GM13976 (cell line): ENCODE measurements at regions of chr16 and their contacts with region 1.

Region 1: GRCh38 chr16:10964039-10964890 is 19.9 kb downstream of the CLEC16A start:
- DNase-seq: peak; percentile 71
- CTCF ChIP-seq: peak; percentile 93

Region 2: GRCh38 chr16:11255737-11256660 is 291.7 kb after region 1 on chr16 and contains the start of gene SOCS1:
- in situ Hi-C with region 1: loop called (anchors 10 kb)
- DNase-seq: peak; percentile 92
- CTCF ChIP-seq: peak; percentile 85

Region 3: GRCh38 chr16:11546608-11547061 is 582.4 kb after region 1 on chr16:
- in situ Hi-C with region 1: loop called (anchors 25 kb)
- DNase-seq: no peak
- CTCF ChIP-seq: no peak

Region 4: GRCh38 chr16:11639925-11640899 is 675.9 kb after region 1 on chr16:
- in situ Hi-C with region 1: loop called (anchors 25 kb)
- DNase-seq: no peak
- CTCF ChIP-seq: no peak

Region 5: DNA sequence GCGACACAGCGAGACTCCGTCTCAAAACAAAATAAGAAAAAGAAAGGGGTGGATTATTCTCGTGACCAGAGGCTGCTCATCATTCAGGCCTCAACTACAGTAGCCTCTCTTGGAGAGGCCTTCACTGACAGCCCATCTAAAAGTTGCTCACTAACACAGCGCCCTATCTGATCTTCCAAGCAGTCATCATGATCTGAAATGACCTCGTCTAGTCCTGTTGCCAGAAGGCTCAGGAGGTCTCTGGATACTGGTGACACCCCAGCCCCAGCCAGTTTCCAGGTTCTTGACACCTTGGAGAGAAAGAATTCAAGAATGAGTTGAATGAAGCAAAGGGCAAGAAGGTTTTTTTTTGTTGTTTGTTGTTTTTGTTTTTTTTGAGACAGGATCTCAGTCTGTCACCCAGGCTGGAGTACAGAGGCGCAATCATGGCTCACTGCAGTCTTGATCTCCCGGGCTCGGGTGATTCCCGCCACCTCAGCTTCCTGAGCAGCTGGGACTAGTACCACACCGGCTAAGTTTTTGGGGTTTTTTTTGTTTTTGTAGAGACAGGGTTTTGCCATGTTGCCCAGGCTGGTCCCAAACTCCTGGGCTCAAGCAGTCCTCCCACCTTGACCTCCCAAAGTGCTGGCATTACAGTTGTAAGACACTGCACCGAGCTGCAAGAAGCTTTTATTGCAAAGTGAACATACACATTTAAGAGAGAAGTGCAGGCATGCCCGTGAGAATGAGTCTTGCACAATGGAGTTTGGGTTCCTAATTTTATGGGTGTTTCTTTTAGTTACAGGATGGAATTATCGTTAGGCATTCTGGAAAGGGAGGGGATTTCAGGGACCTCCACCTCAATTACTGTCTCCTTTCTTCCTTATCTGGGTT is 835.5 kb after region 1 on chr16:
- in situ Hi-C with region 1: loop called (anchors 25 kb)
- DNase-seq: no peak
- CTCF ChIP-seq: no peak